CD14-positive monocyte (primary cell): ENCODE measurements at regions of chr10 and their contacts with region 1.

Region 1: DNA sequence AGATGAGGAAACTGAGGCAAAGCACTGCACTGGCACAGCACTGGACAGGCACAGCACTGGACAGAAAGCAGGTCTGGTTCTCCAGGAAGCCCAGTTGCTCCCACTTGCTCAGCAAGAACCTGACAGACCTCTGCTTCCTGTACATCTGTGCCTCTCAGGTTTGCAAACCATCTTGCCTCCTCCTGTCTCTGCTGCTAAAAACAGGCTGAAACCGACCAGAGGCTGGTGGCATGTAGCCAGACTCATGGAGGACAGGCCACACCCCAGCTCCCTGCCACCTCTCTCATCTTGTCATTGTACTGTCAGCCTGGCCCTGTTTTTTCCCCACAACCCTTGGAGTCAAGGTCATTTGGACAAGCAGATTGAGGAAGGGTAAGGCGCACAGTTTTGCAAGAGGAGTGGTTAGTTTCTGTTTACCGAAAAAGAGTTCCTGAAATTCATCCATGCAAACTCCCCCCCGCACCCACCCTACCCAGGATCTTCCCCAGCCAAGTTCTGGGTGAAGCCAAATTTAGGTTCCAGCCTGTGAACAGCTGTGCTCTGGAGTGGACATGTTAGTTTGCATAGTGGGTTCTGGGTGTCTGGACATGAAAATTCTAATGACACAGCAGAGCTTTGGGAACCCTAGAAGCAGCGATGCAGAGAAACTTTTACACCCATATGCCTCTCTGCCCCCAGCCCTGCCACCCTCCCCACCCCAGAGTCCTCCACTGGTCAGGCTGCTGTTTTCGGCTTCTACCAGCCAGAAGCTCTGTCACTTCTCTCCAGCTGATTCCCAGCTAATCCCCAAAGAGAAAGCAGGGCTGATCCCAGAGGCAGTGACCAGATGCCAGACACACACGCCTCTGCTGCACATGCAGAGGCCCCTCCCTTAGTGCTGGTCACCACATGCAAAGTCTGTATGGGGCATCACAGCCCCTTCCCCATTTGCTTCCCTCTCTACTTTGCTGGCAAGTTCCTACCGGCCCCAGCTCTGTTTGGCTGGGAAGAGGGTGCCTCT is 8.5 kb upstream of the C10orf105 start:
- DNase-seq: peak; percentile 81 to 92 (median 83)
- H3K4me3 ChIP-seq: peak overlapping the region in 1 of 3 experiments; percentile 54
- H3K4me3 Mint-ChIP-seq: peak overlapping the region; percentile 37 to 82
- H3K27ac ChIP-seq: peak overlapping the region; percentile 90 to 94
- H3K27ac Mint-ChIP-seq: peak overlapping the region; percentile 92 to 99 (median 97)
- H3K4me1 ChIP-seq: peaks cover 70 to 92% of the 10 kb centered on the region in 2 donors
- H3K4me1 Mint-ChIP-seq: peaks cover 93% of the 10 kb centered on the region
- H3K27me3 ChIP-seq: no peaks in the 10 kb centered on the region
- H3K27me3 Mint-ChIP-seq: peaks cover 0 to 2% (median 0%) of the 10 kb centered on the region in 3 donors
- CTCF ChIP-seq: no peak

Region 2: GRCh38 chr10:71608819-71609768 is 118.9 kb before region 1 on chr10:
- intact Hi-C with region 1: no loop called
- DNase-seq: peak; percentile 54 to 73 (median 71)
- H3K4me3 ChIP-seq: no peak overlapping the region
- H3K4me3 Mint-ChIP-seq: peak overlapping the region in 1 of 2 donors; percentile 32
- H3K27ac ChIP-seq: no peak overlapping the region
- H3K27ac Mint-ChIP-seq: peak overlapping the region in 1 of 7 donors; percentile 29
- H3K4me1 ChIP-seq: peaks cover 22 to 25% of the 10 kb centered on the region in 2 donors
- H3K4me1 Mint-ChIP-seq: peaks cover 32% of the 10 kb centered on the region
- H3K27me3 ChIP-seq: no peaks in the 10 kb centered on the region
- H3K27me3 Mint-ChIP-seq: peaks cover 2 to 4% (median 3%) of the 10 kb centered on the region in 3 donors
- CTCF ChIP-seq: peak; percentile 84

Region 3: DNA sequence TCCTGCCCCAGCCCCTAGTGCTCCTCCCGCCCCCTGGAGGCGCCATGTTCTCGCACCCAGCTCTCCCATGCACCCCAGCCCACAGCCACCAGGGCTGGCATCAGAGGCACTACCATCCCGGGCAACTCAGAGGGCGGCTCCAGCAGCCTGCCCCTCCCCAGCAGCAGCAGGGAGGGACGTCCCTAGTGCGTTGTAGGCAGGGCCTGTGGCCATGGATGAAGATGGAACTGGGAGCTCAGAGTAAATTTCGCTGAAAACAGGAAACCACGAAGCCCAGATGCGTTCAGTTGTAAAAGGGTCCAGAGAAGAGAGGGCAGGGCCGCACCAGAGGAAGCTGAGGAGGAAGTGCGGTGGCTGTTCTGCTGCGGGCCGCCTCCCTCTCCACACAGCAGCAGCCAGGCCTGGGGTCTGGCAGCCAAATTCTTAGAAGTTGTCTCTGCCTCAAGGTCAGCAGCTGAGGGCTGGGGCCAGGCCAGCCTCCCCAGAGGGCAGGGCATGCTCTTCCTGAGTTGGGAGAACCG is 20.7 kb after region 1 on chr10:
- intact Hi-C with region 1: no loop called
- DNase-seq: peak; percentile 81 to 86 (median 83)
- H3K4me3 ChIP-seq: peak overlapping the region in 1 of 3 experiments; percentile 64
- H3K4me3 Mint-ChIP-seq: peak overlapping the region; percentile 37 to 76
- H3K27ac ChIP-seq: peak overlapping the region; percentile 82 to 83
- H3K27ac Mint-ChIP-seq: peak overlapping the region; percentile 91 to 96 (median 95)
- H3K4me1 ChIP-seq: peaks cover 97 to 100% of the 10 kb centered on the region in 2 donors
- H3K4me1 Mint-ChIP-seq: peaks cover 98% of the 10 kb centered on the region
- H3K27me3 ChIP-seq: no peaks in the 10 kb centered on the region
- H3K27me3 Mint-ChIP-seq: peaks cover 0 to 2% (median 0%) of the 10 kb centered on the region in 3 donors
- CTCF ChIP-seq: no peak

Region 4: DNA sequence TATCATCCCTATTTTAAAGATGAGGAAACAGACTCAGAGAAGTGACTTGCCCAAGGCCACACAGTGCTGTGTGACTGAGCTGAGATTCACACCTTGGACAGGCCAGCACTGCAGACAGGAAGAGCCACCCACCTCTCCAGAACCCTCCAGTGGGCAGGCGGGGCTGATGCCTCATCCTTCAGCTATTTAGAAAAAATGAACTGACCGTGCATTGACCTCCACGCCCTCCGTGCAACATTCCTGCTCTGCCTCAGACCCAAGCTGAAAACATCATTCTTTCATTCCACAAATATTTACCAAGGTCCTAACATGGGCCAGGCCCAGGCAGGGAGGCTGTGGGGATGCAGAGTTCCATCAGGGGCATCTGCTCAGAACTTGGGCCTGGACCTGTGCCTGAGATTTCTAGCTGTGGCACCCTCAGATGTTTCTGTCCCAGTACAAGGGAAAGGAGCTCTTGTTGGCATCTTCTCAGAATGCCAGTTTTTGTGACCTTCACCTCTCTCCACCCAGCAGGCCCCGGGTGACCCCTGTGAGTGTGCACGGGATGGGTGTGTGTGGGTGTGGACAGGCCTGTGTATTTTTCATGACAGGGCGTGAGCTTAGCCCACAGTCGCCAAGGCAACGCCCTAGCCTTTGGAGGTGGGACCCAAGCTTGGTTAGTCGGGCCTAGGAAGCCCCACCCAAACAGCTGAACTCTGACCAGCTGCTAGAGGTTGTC is 38.8 kb after region 1 on chr10:
- intact Hi-C with region 1: loop called (anchors 2 to 5 kb)
- DNase-seq: no peak
- H3K4me3 ChIP-seq: peak overlapping the region in 1 of 3 experiments; percentile 99
- H3K4me3 Mint-ChIP-seq: peak overlapping the region; percentile 64 to 83
- H3K27ac ChIP-seq: peak overlapping the region; percentile 90 to 92
- H3K27ac Mint-ChIP-seq: peak overlapping the region; percentile 90 to 96 (median 93)
- H3K4me1 ChIP-seq: peaks cover 91 to 100% of the 10 kb centered on the region in 2 donors
- H3K4me1 Mint-ChIP-seq: peaks cover 92% of the 10 kb centered on the region
- H3K27me3 ChIP-seq: no peaks in the 10 kb centered on the region
- H3K27me3 Mint-ChIP-seq: peaks cover 0 to 4% (median 2%) of the 10 kb centered on the region in 3 donors
- CTCF ChIP-seq: no peak

Region 5: GRCh38 chr10:71812016-71812912 is 84.2 kb after region 1 on chr10:
- intact Hi-C with region 1: loop called in 1 of 2 experiments (anchors 5 kb)
- DNase-seq: peak; percentile 67 to 76 (median 68)
- H3K4me3 ChIP-seq: no peak overlapping the region
- H3K4me3 Mint-ChIP-seq: no peak overlapping the region
- H3K27ac ChIP-seq: peak overlapping the region; percentile 6 to 31
- H3K27ac Mint-ChIP-seq: peak overlapping the region in 5 of 7 donors; percentile 53 to 78 (median 58)
- H3K4me1 ChIP-seq: peaks cover 52 to 78% of the 10 kb centered on the region in 2 donors
- H3K4me1 Mint-ChIP-seq: peaks cover 64% of the 10 kb centered on the region
- H3K27me3 ChIP-seq: no peaks in the 10 kb centered on the region
- H3K27me3 Mint-ChIP-seq: peaks cover 0 to 4% (median 0%) of the 10 kb centered on the region in 3 donors
- CTCF ChIP-seq: peak; percentile 85